Caco-2 (cell line): ENCODE measurements at regions of chr14 and their contacts with region 1.

Region 1: DNA sequence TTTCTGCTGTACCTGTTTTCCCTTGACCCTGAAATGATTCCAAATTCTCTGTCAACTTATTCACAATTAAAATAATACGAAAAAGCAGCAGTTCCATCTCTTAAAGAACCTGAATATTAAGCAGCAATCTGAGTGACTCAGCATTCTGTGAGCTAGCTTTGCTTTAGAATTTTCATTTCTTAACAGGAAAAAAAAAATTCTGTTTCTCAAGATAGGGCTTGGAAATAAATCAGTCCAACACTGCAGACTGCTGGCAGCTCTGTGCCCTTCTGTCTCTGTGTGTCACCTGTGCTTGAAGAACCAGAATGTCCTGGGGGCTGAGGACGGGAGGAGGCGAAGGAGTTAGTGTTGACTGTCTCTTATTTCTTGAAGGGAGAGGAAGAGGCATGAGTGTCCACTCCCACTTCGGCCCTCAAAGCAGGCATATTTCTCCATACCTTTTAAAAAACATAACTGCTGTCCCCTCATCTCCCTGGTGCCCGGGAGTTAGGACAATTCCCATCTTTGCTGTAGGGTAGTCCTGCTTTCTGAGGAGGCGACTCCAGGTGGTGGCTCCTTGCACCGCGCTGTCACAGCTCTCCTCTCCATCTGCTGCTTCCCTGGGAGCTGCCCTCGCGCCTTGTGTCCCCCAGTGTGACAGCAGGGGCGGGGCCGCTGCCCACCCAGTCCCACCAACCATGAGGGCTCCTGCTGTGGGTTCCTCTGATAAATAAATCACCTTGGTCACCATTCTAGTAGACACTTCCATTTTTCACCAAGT is 203.1 kb downstream of the CALM1 start:
- DNase-seq: peak in 1 of 2 experiments; percentile 25
- H3K4me3 ChIP-seq: no peak overlapping the region
- H3K4me3 Mint-ChIP-seq: no peak overlapping the region
- H3K27ac Mint-ChIP-seq: peak overlapping the region; percentile 48
- H3K4me1 ChIP-seq: no peaks in the 10 kb centered on the region
- H3K4me1 Mint-ChIP-seq: no peaks in the 10 kb centered on the region
- H3K27me3 ChIP-seq: no peaks in the 10 kb centered on the region
- H3K27me3 Mint-ChIP-seq: no peaks in the 10 kb centered on the region
- CTCF ChIP-seq: peak in 1 of 2 experiments; percentile 39

Region 2: GRCh38 chr14:90301668-90302090 is 298.2 kb before region 1 on chr14:
- CTCF ChIA-PET with region 1: interaction called, 3 read pairs
- POLR2A ChIA-PET with region 1: no interaction called
- intact Hi-C with region 1: loop called (anchors 10 kb)
- DNase-seq: peak in 1 of 2 experiments; percentile 11
- H3K4me3 ChIP-seq: no peak overlapping the region
- H3K4me3 Mint-ChIP-seq: no peak overlapping the region
- H3K27ac Mint-ChIP-seq: no peak overlapping the region
- H3K4me1 ChIP-seq: no peaks in the 10 kb centered on the region
- H3K4me1 Mint-ChIP-seq: no peaks in the 10 kb centered on the region
- H3K27me3 ChIP-seq: no peaks in the 10 kb centered on the region
- H3K27me3 Mint-ChIP-seq: no peaks in the 10 kb centered on the region
- CTCF ChIP-seq: peak in 1 of 2 experiments; percentile 38

Region 3: GRCh38 chr14:90850487-90850886 is 250.6 kb after region 1 on chr14:
- CTCF ChIA-PET with region 1: no interaction called
- POLR2A ChIA-PET with region 1: no interaction called
- intact Hi-C with region 1: no loop called
- DNase-seq: no peak
- H3K4me3 ChIP-seq: no peak overlapping the region
- H3K4me3 Mint-ChIP-seq: no peak overlapping the region
- H3K27ac Mint-ChIP-seq: no peak overlapping the region
- H3K4me1 ChIP-seq: no peaks in the 10 kb centered on the region; the same call in 1 of the 2 replicates
- H3K4me1 Mint-ChIP-seq: peaks cover 6% of the 10 kb centered on the region
- H3K27me3 ChIP-seq: no peaks in the 10 kb centered on the region
- H3K27me3 Mint-ChIP-seq: no peaks in the 10 kb centered on the region
- CTCF ChIP-seq: no peak